Tibial artery (tissue), 4 donors: ENCODE measurements at regions of chr4 and their contacts with region 1.

Region 1: DNA sequence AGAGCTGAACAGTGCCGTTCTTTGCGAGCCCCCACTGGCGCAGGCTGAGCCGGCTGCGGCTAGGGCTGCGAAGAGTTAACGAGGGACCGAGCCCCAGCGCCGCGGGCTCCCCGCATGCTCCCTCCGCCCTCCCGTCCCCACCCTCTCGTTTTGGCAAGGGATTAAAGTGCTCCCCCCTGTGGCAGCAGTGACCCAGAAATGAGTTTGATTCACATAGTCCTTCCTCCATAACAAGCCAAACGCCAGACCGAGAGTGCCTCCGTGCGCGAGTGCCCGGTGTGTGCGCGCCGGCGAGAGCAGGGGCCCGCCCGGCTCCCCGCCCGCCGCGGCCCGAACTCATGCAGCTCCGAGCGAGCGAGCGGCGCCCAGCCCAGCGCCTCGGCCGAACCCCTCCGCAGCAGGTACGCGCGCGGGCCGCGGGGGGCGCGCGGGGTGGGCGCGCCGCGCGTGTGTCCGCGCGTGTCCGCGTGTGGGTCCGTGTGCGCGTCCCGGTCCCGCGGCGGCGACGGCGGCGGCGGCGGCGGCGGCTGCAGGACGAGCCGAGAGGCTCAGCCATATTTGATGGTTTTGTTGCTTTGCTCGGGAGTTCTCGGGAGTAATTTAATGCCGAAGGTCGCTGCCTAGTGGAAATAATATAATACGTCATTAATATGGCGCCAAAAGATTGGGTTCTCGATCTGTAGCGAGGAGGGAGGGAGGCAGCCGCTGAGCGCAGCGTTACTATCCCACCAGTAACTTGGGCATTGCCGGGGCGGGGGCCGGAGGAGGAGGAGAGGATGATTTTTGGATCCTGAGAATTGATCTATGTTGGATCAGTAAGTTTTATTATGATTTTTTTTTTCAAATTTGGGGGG is at the start of gene JADE1:
- DNase-seq: peak; percentile 95
- H3K4me3 ChIP-seq: peak within 1 kb of the TSS; percentile 73 to 95
- H3K27ac ChIP-seq: peak within 1 kb of the TSS; percentile 88 to 92
- H3K4me1 ChIP-seq: peaks cover 0 to 11% (median 4%) of the 10 kb centered on the region in 4 donors
- H3K27me3 ChIP-seq: no peaks in the 10 kb centered on the region
- CTCF ChIP-seq: peak; percentile 46 to 63

Region 2: GRCh38 chr4:128454281-128455075 is 355.2 kb before region 1 on chr4:
- intact Hi-C with region 1: loop called (anchors 2 kb)
- DNase-seq: peak; percentile 87 to 92
- H3K4me3 ChIP-seq: no peak overlapping the region
- H3K27ac ChIP-seq: no peak overlapping the region
- H3K4me1 ChIP-seq: peaks cover 0 to 6% (median 3%) of the 10 kb centered on the region in 4 donors
- H3K27me3 ChIP-seq: no peaks in the 10 kb centered on the region
- CTCF ChIP-seq: peak; percentile 82 to 83

Region 3: DNA sequence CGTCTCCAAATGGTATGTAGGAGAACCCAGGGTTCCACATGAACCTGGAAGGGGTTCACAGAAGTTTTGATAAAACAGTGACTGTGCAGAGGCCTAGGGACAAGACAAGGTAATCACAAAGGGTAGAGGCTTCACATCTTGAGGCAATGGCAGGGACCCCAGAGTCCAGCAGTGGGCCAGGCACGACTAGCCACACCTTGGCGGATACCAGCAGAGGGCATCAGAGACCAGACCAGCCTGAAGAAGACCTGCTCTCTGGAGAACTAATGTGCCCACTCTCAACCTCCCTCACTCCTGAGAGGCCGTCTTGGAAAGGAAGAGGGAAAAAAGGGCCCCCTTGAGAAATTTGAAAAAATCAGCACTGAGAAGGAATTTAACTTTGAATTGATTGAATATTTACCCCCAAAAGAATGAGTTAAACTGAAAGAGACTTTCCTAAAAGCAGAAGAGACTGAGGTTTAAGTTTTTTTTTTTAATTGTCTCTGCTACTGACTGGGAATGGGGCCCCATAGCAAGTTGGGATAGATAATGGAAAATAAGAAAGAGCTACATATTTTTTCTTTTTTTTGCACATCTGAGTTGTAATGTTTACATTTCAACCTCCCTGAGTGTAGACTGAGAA is 244.0 kb before region 1 on chr4:
- intact Hi-C with region 1: loop called (anchors 5 kb)
- DNase-seq: no peak
- H3K4me3 ChIP-seq: no peak overlapping the region
- H3K27ac ChIP-seq: no peak overlapping the region
- H3K4me1 ChIP-seq: peaks cover 0 to 35% (median 7%) of the 10 kb centered on the region in 4 donors
- H3K27me3 ChIP-seq: no peaks in the 10 kb centered on the region
- CTCF ChIP-seq: peak; percentile 38 to 44

Region 4: GRCh38 chr4:128686032-128686465 is 123.7 kb before region 1 on chr4:
- intact Hi-C with region 1: no loop called
- DNase-seq: no peak
- H3K4me3 ChIP-seq: no peak overlapping the region
- H3K27ac ChIP-seq: no peak overlapping the region
- H3K4me1 ChIP-seq: peaks cover 0 to 8% (median 0%) of the 10 kb centered on the region in 4 donors
- H3K27me3 ChIP-seq: no peaks in the 10 kb centered on the region
- CTCF ChIP-seq: no peak